ENCODE measurements at regions of chr17 and their contacts with region 1.

Region 1: GRCh38 chr17:18314731-18315561 is at the starts of genes SMCR8 and TOP3A:
- DNase-seq: peak; percentile 98 to 99
- H3K4me3 ChIP-seq: peak within 1 kb of the TSS; percentile 86
- H3K4me3 Mint-ChIP-seq: peak within 1 kb of the TSS; percentile 89
- H3K27ac Mint-ChIP-seq: peak within 1 kb of the TSS; percentile 97
- H3K4me1 ChIP-seq: peaks cover 12% of the 10 kb centered on the region
- H3K4me1 Mint-ChIP-seq: peaks cover 16% of the 10 kb centered on the region
- H3K27me3 ChIP-seq: no peaks in the 10 kb centered on the region
- H3K27me3 Mint-ChIP-seq: no peaks in the 10 kb centered on the region
- CTCF ChIP-seq: no peak
- total RNA-seq, gene SMCR8: 28.4 TPM in 2 replicates
- total RNA-seq, gene TOP3A: 73.7 and 81.1 TPM in 2 replicates

Region 2: DNA sequence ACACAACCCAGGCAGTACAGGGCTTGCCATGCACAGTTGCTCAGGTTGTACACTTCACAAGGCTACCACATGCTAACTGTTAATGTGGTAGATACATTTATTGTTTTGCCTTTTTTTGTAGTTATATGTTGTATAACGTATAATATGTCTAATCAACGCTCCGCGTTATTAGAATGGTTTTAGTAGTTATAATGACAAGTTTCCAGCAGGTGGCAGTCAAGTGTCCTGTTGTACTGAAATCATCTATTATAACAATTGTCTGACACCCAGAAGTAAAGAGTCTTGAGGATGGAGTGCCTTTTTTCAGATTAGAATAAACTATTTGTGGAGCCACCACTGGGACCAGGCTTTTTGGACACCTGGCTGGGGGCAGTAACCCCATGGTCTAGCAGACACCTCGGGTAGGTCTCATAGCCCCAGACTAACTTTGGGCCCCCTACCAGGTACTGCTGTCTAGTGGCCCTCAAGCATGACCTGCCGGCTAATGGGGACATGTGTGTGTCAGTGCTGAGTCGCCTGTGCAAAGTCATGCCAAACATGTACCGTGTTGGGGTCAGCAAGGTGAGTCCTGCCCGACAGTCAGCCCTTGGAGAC is 173.6 kb before region 1 on chr17:
- CTCF ChIA-PET with region 1: no interaction called
- POLR2A ChIA-PET with region 1: no interaction called
- intact Hi-C with region 1: no loop called
- DNase-seq: peak in 1 of 2 experiments; percentile 62
- H3K4me3 ChIP-seq: no peak overlapping the region
- H3K4me3 Mint-ChIP-seq: no peak overlapping the region
- H3K27ac Mint-ChIP-seq: no peak overlapping the region
- H3K4me1 ChIP-seq: peaks cover 5% of the 10 kb centered on the region
- H3K4me1 Mint-ChIP-seq: peaks cover 14% of the 10 kb centered on the region
- H3K27me3 ChIP-seq: no peaks in the 10 kb centered on the region
- H3K27me3 Mint-ChIP-seq: no peaks in the 10 kb centered on the region
- CTCF ChIP-seq: peak; percentile 55 to 73

Region 3: GRCh38 chr17:18260332-18261144 is 54.4 kb before region 1 on chr17 and contains the start of gene MIEF2:
- CTCF ChIA-PET with region 1: interaction called, 3 read pairs
- POLR2A ChIA-PET with region 1: interaction called, 4 read pairs
- intact Hi-C with region 1: loop called (anchors 1 kb)
- DNase-seq: peak; percentile 97 to 98
- H3K4me3 ChIP-seq: peak within 1 kb of the TSS; percentile 87
- H3K4me3 Mint-ChIP-seq: peak within 1 kb of the TSS; percentile 80
- H3K27ac Mint-ChIP-seq: peak within 1 kb of the TSS; percentile 96
- H3K4me1 ChIP-seq: peaks cover 31% of the 10 kb centered on the region
- H3K4me1 Mint-ChIP-seq: peaks cover 4% of the 10 kb centered on the region
- H3K27me3 ChIP-seq: no peaks in the 10 kb centered on the region
- H3K27me3 Mint-ChIP-seq: no peaks in the 10 kb centered on the region
- CTCF ChIP-seq: no peak
- total RNA-seq, gene MIEF2: 22.3 and 22.8 TPM in 2 replicates

Region 4: DNA sequence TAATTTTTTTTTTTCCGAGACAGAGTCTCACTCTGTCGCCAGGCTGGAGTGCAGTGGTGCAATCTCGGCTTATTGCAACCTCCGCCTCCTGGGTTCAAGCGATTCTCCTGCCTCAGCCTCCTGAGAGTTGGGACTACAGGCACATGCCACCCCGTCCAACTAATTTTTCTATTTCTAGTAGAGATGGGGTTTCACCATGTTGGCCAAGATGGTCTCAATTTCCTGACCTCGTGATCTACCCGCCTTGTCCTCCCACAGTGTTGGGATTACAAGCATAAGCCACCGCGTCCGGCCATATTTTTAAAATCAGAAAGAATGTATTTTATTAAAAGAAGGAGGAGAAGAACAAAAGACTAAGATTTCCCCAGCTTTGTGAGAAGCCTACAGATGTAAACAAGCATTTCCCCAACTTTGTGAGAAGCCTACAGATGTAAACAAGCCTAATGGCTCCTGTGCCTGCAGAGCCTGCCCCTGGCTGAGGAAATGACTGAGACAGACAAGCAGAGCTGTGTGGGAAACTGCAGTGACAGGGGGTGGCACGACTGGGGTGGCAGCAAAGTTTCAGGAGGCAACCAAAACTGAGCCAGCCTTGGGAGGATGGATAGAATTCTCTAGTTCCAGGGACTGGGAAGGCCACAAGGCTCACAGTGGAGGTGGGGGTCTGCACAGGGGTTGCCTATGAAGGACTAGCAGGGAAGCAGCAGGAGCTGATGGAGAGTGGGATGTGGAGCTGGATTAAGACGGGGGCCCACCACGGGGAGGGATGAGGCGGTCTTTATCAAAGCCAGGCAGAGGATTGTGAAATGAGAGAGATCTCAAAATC is 23.0 kb before region 1 on chr17:
- CTCF ChIA-PET with region 1: no interaction called
- POLR2A ChIA-PET with region 1: no interaction called
- intact Hi-C with region 1: loop called (anchors 2 kb)
- DNase-seq: no peak
- H3K4me3 ChIP-seq: no peak overlapping the region
- H3K4me3 Mint-ChIP-seq: no peak overlapping the region
- H3K27ac Mint-ChIP-seq: no peak overlapping the region
- H3K4me1 ChIP-seq: no peaks in the 10 kb centered on the region
- H3K4me1 Mint-ChIP-seq: no peaks in the 10 kb centered on the region
- H3K27me3 ChIP-seq: no peaks in the 10 kb centered on the region
- H3K27me3 Mint-ChIP-seq: no peaks in the 10 kb centered on the region
- CTCF ChIP-seq: no peak

Region 5: DNA sequence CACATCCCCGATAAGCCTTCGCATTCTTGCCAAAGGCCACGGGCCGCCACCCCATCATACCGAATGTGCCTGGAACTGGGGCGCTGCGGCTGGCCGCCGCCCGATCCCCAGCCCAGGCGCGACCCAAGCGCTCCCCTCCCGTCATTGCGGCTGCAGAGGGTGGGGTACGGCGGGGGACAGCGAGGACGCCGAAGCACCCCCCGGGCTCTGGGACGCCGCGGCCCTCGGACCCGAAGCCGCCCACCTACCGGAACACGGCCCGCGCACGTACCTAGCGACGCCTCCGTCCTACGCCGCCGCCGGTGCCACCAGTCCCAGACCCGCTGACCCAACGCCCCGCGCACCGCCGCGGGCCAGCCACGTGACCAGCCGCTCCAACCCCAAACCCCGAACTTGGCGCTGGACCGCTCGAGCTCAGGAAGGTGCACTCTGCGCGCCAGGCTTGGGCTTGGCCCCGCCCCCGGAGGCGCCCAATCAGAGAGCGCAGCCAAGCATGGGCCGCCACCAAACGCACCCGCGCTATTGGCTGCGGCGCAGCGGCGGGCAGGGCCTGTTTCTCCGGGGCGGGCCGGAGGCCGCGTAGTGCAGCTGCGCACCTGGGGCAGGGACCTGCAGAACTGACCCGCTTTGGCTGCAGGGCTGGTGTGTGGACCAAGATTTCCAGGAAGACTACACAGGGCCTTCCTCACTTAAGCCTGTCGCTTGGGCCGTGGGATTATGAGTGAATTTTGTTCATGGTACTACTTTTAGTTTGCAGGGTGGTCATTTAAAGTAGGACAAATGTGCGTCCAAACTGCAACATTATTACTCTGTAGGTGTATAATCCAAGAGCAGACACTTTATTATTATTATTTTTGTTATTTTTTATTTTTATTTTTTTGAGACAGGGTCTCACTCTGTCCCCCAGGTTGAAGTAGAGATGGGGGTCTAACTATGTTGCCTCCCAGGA is 48.4 kb after region 1 on chr17 and contains the start of gene SHMT1:
- CTCF ChIA-PET with region 1: no interaction called
- POLR2A ChIA-PET with region 1: no interaction called
- intact Hi-C with region 1: loop called (anchors 1 kb)
- DNase-seq: peak; percentile 96 to 98
- H3K4me3 ChIP-seq: peak within 1 kb of the TSS; percentile 99
- H3K4me3 Mint-ChIP-seq: peak within 1 kb of the TSS; percentile 81
- H3K27ac Mint-ChIP-seq: peak within 1 kb of the TSS; percentile 45
- H3K4me1 ChIP-seq: 0 out of 2 replicates have a peak, but pooled peaks cover 4% of the 10 kb centered on the region
- H3K4me1 Mint-ChIP-seq: peaks cover 7% of the 10 kb centered on the region
- H3K27me3 ChIP-seq: no peaks in the 10 kb centered on the region; the same call in 1 of the 2 replicates
- H3K27me3 Mint-ChIP-seq: no peaks in the 10 kb centered on the region
- CTCF ChIP-seq: no peak
- total RNA-seq, gene SHMT1: 69.4 and 72.4 TPM in 2 replicates

Measured in Caco-2 (cell line).